ENCODE measurements at regions of chr7 and their contacts with region 1.

Region 1: GRCh38 chr7:97104719-97105238 is 12.7 kb upstream of the SDHAF3 start:
- DNase-seq: peak; percentile 85
- H3K4me3 Mint-ChIP-seq: no peak overlapping the region
- H3K27ac Mint-ChIP-seq: no peak overlapping the region
- H3K4me1 Mint-ChIP-seq: no peaks in the 10 kb centered on the region
- H3K27me3 Mint-ChIP-seq: peaks cover 20% of the 10 kb centered on the region
- CTCF ChIP-seq: peak; percentile 57

Region 2: GRCh38 chr7:96819111-96819700 is 285.6 kb before region 1 on chr7:
- CTCF ChIA-PET with region 1: no interaction called
- intact Hi-C with region 1: no loop called
- DNase-seq: no peak
- H3K4me3 Mint-ChIP-seq: no peak overlapping the region
- H3K27ac Mint-ChIP-seq: no peak overlapping the region
- H3K4me1 Mint-ChIP-seq: no peaks in the 10 kb centered on the region
- H3K27me3 Mint-ChIP-seq: no peaks in the 10 kb centered on the region
- CTCF ChIP-seq: no peak

Region 3: GRCh38 chr7:97006036-97006815 is 98.6 kb before region 1 on chr7:
- CTCF ChIA-PET with region 1: no interaction called
- intact Hi-C with region 1: no loop called
- DNase-seq: peak; percentile 41
- H3K4me3 Mint-ChIP-seq: peak overlapping the region; percentile 73
- H3K27ac Mint-ChIP-seq: no peak overlapping the region
- H3K4me1 Mint-ChIP-seq: no peaks in the 10 kb centered on the region
- H3K27me3 Mint-ChIP-seq: peaks cover 17% of the 10 kb centered on the region
- CTCF ChIP-seq: no peak

Region 4: GRCh38 chr7:97179454-97180104 is 74.8 kb after region 1 on chr7:
- CTCF ChIA-PET with region 1: no interaction called
- intact Hi-C with region 1: loop called (anchors 2 kb)
- DNase-seq: peak; percentile 35
- H3K4me3 Mint-ChIP-seq: no peak overlapping the region
- H3K27ac Mint-ChIP-seq: no peak overlapping the region
- H3K4me1 Mint-ChIP-seq: no peaks in the 10 kb centered on the region
- H3K27me3 Mint-ChIP-seq: no peaks in the 10 kb centered on the region
- CTCF ChIP-seq: peak; percentile 52

Region 5: DNA sequence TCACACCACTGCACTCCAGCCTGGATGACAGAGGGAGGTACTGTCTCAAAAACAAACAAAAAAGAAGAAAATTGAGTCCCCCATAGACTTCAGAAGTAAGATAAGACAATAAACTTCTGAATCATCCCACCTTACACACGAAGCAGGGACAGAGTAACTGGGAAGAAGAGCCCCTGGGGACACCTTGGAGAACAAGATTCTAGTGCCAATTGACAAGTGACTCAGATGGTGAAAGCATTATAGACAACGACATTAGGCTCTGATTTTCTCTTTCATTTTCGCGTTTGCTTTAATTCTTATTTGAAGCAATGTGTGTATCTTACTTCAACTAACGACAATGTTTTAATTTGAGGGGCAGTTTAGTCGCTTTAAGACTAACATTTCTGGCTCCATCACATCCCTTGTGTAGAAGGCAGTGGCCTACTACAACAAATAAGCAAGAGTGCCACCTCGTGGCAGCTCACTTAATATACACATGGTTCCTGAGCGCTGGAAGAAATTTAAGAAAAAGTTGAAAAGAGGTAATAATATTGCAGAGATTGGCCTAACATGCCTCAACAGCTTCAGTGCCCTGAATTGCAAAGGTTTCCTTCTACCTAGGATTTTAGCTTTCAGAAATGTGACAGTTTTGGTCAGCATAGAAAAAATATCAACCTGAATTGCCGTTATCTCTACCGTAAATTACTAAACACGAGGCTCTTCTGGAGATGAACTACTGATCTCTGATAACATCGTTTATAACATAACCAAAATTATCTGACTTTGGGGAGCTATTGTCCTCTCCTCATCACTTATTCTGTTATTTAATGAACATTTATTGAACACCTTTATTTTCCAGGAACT is 730.7 kb after region 1 on chr7:
- CTCF ChIA-PET with region 1: interaction called, 3 read pairs
- intact Hi-C with region 1: loop called (anchors 2 kb)
- DNase-seq: peak; percentile 62
- H3K4me3 Mint-ChIP-seq: no peak overlapping the region
- H3K27ac Mint-ChIP-seq: no peak overlapping the region
- H3K4me1 Mint-ChIP-seq: no peaks in the 10 kb centered on the region
- H3K27me3 Mint-ChIP-seq: peaks cover 45% of the 10 kb centered on the region
- CTCF ChIP-seq: peak; percentile 32

Region 6: GRCh38 chr7:97845622-97846203 is 740.9 kb after region 1 on chr7:
- CTCF ChIA-PET with region 1: no interaction called
- intact Hi-C with region 1: loop called (anchors 1 kb)
- DNase-seq: peak; percentile 17
- H3K4me3 Mint-ChIP-seq: no peak overlapping the region
- H3K27ac Mint-ChIP-seq: no peak overlapping the region
- H3K4me1 Mint-ChIP-seq: no peaks in the 10 kb centered on the region
- H3K27me3 Mint-ChIP-seq: peaks cover 10% of the 10 kb centered on the region
- CTCF ChIP-seq: peak; percentile 14

Region 7: DNA sequence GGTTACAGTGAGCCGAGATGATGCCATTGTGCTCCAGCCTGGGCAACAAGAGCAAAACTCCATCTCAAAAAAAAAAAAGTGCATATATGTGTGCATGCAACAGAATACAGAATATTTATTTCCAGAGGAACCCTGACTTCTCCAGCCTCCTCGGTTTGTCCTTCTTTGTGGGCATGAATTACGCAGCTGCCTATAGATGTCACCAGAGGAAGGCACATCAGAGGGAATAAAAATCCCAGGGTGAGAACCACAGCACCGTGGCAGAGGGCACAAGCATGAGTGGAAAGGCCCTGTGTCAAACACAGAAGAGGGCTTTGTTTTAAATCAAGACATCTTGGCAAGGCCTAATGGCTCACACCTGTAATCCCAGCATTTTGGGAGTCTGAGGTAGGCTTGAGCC is 909.6 kb after region 1 on chr7:
- CTCF ChIA-PET with region 1: no interaction called
- intact Hi-C with region 1: loop called (anchors 10 kb)
- DNase-seq: no peak
- H3K4me3 Mint-ChIP-seq: no peak overlapping the region
- H3K27ac Mint-ChIP-seq: no peak overlapping the region
- H3K4me1 Mint-ChIP-seq: no peaks in the 10 kb centered on the region
- H3K27me3 Mint-ChIP-seq: no peaks in the 10 kb centered on the region
- CTCF ChIP-seq: no peak

Measured in Calu3 (cell line).